ENCODE measurements at regions of chr2 and their contacts with region 1.

Region 1: DNA sequence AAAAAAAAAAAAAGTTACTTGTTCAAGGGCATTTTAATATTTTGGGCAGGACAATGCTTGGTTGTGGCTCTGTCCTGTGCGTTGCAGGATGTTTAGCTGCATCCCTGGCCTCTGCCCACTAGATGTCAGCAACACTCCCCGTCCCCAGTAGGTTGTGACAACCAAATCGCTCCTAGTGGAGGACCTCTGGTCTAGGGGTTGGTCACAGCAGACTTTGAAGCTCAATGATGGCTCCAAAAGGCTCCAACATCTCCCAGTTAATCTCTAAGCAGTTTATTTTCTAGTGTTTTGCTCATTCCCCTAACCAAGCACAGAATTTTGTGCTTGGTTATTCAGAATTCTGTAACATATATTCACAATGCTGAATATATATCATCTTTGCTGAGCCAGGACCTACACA is 67.0 kb downstream of the CHRNA1 start:
- DNase-seq: peak; percentile 78
- H3K4me3 ChIP-seq: no peak overlapping the region
- H3K27ac ChIP-seq: no peak overlapping the region
- H3K4me1 ChIP-seq: no peaks in the 10 kb centered on the region
- H3K27me3 ChIP-seq: no peaks in the 10 kb centered on the region; the same call in 1 of the 2 replicates

Region 2: GRCh38 chr2:175309799-175310198 is 612.5 kb after region 1 on chr2:
- in situ Hi-C with region 1: loop called (anchors 25 kb)
- DNase-seq: peak; percentile 51
- H3K4me3 ChIP-seq: no peak overlapping the region
- H3K27ac ChIP-seq: no peak overlapping the region
- H3K4me1 ChIP-seq: no peaks in the 10 kb centered on the region
- H3K27me3 ChIP-seq: peaks cover 12% of the 10 kb centered on the region